ENCODE measurements at regions of chr16 and their contacts with region 1.

Region 1: GRCh38 chr16:47037746-47038458 is 64.4 kb upstream of the DNAJA2 start:
- DNase-seq: peak; percentile 88
- H3K4me3 ChIP-seq: peak overlapping the region; percentile 57
- H3K27ac ChIP-seq: no peak overlapping the region
- H3K4me1 ChIP-seq: peaks cover 4% of the 10 kb centered on the region
- H3K27me3 ChIP-seq: no peaks in the 10 kb centered on the region
- CTCF ChIP-seq: peak; percentile 92

Region 2: GRCh38 chr16:47019568-47019967 is 18.3 kb before region 1 on chr16:
- CTCF ChIA-PET with region 1: interaction called, 3 read pairs
- POLR2A ChIA-PET with region 1: interaction called, 16 read pairs
- intact Hi-C with region 1: no loop called
- DNase-seq: peak; percentile 52
- H3K4me3 ChIP-seq: no peak overlapping the region
- H3K27ac ChIP-seq: no peak overlapping the region
- H3K4me1 ChIP-seq: no peaks in the 10 kb centered on the region
- H3K27me3 ChIP-seq: no peaks in the 10 kb centered on the region
- CTCF ChIP-seq: peak; percentile 57

Region 3: GRCh38 chr16:48150707-48151106 is 1112.8 kb after region 1 on chr16:
- CTCF ChIA-PET with region 1: interaction called, 10 read pairs
- POLR2A ChIA-PET with region 1: no interaction called
- intact Hi-C with region 1: loop called (anchors 5 kb)
- DNase-seq: no peak
- H3K4me3 ChIP-seq: no peak overlapping the region
- H3K27ac ChIP-seq: no peak overlapping the region
- H3K4me1 ChIP-seq: no peaks in the 10 kb centered on the region
- H3K27me3 ChIP-seq: peaks cover 7% of the 10 kb centered on the region
- CTCF ChIP-seq: no peak

Region 4: GRCh38 chr16:48156790-48157209 is 1118.9 kb after region 1 on chr16:
- CTCF ChIA-PET with region 1: interaction called, 3 read pairs
- POLR2A ChIA-PET with region 1: no interaction called
- intact Hi-C with region 1: loop called (anchors 5 kb)
- DNase-seq: peak; percentile 82
- H3K4me3 ChIP-seq: no peak overlapping the region
- H3K27ac ChIP-seq: no peak overlapping the region
- H3K4me1 ChIP-seq: no peaks in the 10 kb centered on the region
- H3K27me3 ChIP-seq: no peaks in the 10 kb centered on the region
- CTCF ChIP-seq: peak; percentile 91